ENCODE measurements at regions of chr11 and their contacts with region 1.

Region 1: GRCh38 chr11:68447015-68447801 is 13.3 kb upstream of the PPP6R3 start:
- DNase-seq: peak; percentile 75 to 89 (median 79)
- ATAC-seq: peak; percentile 65 to 93 (median 90)
- H3K4me3 ChIP-seq: no peak overlapping the region
- H3K27ac ChIP-seq: peak overlapping the region in 2 of 12 donors; percentile 19 to 38
- H3K4me1 ChIP-seq: peaks cover 0 to 11% (median 1%) of the 10 kb centered on the region in 12 donors
- H3K27me3 ChIP-seq: no peaks in the 10 kb centered on the region
- CTCF ChIP-seq: peak; percentile 90 to 98 (median 96)
- POLR2A ChIP-seq: no peak

Region 2: GRCh38 chr11:68257475-68258362 is 189.5 kb before region 1 on chr11:
- intact Hi-C with region 1: loop called (anchors 1 to 5 kb)
- DNase-seq: peak; percentile 92 to 97 (median 96)
- ATAC-seq: peak; percentile 61 to 88 (median 84)
- H3K4me3 ChIP-seq: peak overlapping the region in 5 of 12 donors; percentile 18 to 38 (median 26)
- H3K27ac ChIP-seq: peak overlapping the region in 2 of 12 donors; percentile 17 to 39
- H3K4me1 ChIP-seq: peaks cover 0 to 24% (median 8%) of the 10 kb centered on the region in 12 donors
- H3K27me3 ChIP-seq: no peaks in the 10 kb centered on the region
- CTCF ChIP-seq: peak; percentile 83 to 93 (median 89)
- POLR2A ChIP-seq: no peak

Region 3: GRCh38 chr11:68297812-68298658 is 149.2 kb before region 1 on chr11:
- intact Hi-C with region 1: loop called in 4 of 10 experiments (anchors 5 to 10 kb)
- DNase-seq: peak; percentile 77 to 92 (median 80)
- ATAC-seq: peak; percentile 93 to 97 (median 96)
- H3K4me3 ChIP-seq: peak overlapping the region in 5 of 12 donors; percentile 3 to 28 (median 10)
- H3K27ac ChIP-seq: no peak overlapping the region
- H3K4me1 ChIP-seq: peaks cover 0 to 22% (median 12%) of the 10 kb centered on the region in 12 donors
- H3K27me3 ChIP-seq: no peaks in the 10 kb centered on the region
- CTCF ChIP-seq: peak in 11 of 12 donors; percentile 94 to 99 (median 98)
- POLR2A ChIP-seq: no peak

Region 4: GRCh38 chr11:68398995-68399851 is 48.0 kb before region 1 on chr11:
- intact Hi-C with region 1: loop called in 4 of 10 experiments (anchors 5 to 10 kb)
- DNase-seq: peak; percentile 81 to 91 (median 85)
- ATAC-seq: peak; percentile 84 to 86 (median 84)
- H3K4me3 ChIP-seq: peak overlapping the region in 1 of 12 donors; percentile 4
- H3K27ac ChIP-seq: peak overlapping the region; percentile 64 to 91 (median 84)
- H3K4me1 ChIP-seq: peaks cover 9 to 54% (median 33%) of the 10 kb centered on the region in 12 donors
- H3K27me3 ChIP-seq: no peaks in the 10 kb centered on the region
- CTCF ChIP-seq: no peak
- POLR2A ChIP-seq: no peak